ENCODE measurements at regions of chr16 and their contacts with region 1.

Region 1: DNA sequence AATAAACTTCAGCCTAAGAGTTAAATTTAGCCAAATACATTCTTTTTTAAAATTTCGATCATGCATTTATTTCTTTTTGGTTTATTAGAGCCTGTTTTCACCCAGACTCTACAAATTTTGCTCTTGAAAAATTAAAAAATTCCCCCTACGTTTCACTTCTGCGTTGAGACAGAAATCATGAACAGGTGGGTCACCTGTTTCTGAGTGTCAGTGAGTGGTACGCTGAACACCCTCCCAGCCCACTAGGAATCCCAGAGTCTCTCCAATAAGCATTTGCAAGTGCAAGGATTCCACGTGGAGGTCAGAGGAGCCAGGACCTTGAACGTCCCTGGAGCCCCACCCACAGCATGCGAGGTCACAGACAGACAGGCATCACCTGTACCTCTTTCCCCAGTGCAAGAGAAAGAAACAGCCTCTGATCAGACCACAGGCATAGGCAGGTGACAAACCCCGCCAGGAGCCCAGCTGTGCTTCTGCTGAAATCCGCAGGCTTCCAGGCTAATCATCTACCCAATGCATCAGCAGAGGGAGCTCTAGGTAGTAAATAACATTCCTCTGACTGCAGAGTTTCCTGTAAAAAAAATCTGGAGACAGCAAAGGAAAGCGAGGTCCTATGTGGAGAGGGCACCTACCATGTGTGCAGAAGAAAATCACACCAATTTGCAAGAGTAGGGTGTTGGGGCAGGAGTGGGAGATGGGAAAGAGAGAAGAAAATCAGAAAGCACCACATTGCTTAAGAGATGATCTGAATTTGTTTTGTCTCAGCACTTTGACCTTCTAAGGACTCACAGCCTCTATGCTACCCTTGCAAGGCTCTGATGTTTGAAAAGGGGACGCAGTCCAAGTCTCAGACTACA is 5.9 kb upstream of the XYLT1 start:
- DNase-seq: peak; percentile 39 to 83
- H3K4me3 ChIP-seq: no peak overlapping the region
- CTCF ChIP-seq: no peak
- POLR2A ChIP-seq: no peak

Region 2: GRCh38 chr16:17224879-17225281 is 251.8 kb before region 1 on chr16:
- intact Hi-C with region 1: loop called (anchors 10 kb)
- DNase-seq: peak in 1 of 2 donors; percentile 60
- H3K4me3 ChIP-seq: no peak overlapping the region
- CTCF ChIP-seq: no peak
- POLR2A ChIP-seq: no peak

Region 3: DNA sequence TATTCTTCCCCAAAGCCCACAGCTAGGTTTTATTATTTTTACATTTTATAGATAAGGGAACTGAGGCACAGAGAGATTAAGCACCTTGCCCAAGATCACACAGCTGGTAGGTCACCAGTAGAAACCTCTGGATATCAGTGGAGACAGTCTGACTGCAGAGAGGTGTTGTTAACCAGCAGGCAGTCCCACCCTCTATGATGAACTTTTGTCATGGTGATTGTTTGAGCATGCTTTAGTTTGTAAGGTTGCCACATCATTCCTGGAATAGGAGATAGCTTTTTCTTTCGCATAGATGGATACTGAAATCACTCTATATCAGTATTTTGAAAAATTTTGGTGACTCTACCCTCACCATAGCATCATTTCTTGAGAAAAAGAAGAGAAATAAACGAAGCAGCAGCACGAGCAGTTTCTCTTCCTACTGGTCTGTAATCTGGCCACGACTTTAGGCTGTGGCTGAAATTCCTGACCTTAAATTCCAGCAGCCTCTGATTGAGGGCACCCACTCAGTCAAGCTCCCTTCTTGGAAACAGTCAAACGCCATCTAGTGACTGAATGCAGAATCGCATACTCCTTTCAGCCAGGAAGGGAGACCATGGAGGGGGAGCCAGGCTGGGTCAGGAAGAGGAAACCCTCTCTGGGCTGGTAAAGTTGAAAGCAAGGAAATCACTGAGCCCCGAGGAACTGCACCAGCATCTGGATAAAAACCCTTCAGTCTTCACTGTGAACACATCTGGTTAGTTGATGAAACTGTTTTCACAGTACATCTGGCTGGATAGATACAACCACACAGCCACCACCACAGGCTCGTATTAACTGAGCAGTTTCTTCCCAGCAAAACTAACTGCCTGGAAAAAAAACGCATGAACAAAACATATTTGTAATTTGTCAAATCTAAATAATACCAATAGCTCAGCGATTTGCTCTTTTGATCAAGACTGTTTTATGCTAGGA is 102.6 kb after region 1 on chr16:
- intact Hi-C with region 1: loop called (anchors 10 kb)
- DNase-seq: peak; percentile 80 to 89
- H3K4me3 ChIP-seq: no peak overlapping the region
- CTCF ChIP-seq: peak in 1 of 3 donors; percentile 43
- POLR2A ChIP-seq: no peak

Region 4: GRCh38 chr16:17759451-17760390 is 283.1 kb after region 1 on chr16:
- intact Hi-C with region 1: no loop called
- DNase-seq: no peak
- H3K4me3 ChIP-seq: no peak overlapping the region
- CTCF ChIP-seq: no peak
- POLR2A ChIP-seq: no peak

Measured in lower leg skin (tissue), 4 donors.